Cardiac septum (tissue), 1 donor: ENCODE measurements at regions of chr9 and their contacts with region 1.

Region 1: GRCh38 chr9:131668439-131669268 is 71.2 kb downstream of the RAPGEF1 start:
- DNase-seq: no peak

Region 2: GRCh38 chr9:131635285-131635684 is 33.4 kb before region 1 on chr9:
- intact Hi-C with region 1: loop called (anchors 5 kb)
- DNase-seq: peak; percentile 93